Activated T-helper 1 cell treated with anti-CD3 and anti-CD28 coated beads, Interleukin-12 subunit alpha, Interleukin-12 subunit beta, Interleukin-2, Interleukin-4 antibody, amounts not matched to agents 30 ng/mL and 10 ng/mL and 1 ng/mL, durations not matched to agents 14 hours and 24 hours and 36 hours (primary cell): ENCODE measurements at regions of chr20 and their contacts with region 1.

Region 1: GRCh38 chr20:53839423-53840176 is 230.8 kb downstream of the BCAS1 start:
- DNase-seq: peak; percentile 62
- H3K4me3 Mint-ChIP-seq: peak overlapping the region; percentile 80
- H3K27ac Mint-ChIP-seq: peak overlapping the region; percentile 96
- H3K4me1 Mint-ChIP-seq: peaks cover 72% of the 10 kb centered on the region
- H3K27me3 Mint-ChIP-seq: peaks cover 2% of the 10 kb centered on the region

Region 2: GRCh38 chr20:53547664-53548239 is 291.8 kb before region 1 on chr20:
- intact Hi-C with region 1: no loop called
- DNase-seq: peak; percentile 24
- H3K4me3 Mint-ChIP-seq: no peak overlapping the region
- H3K27ac Mint-ChIP-seq: no peak overlapping the region
- H3K4me1 Mint-ChIP-seq: no peaks in the 10 kb centered on the region
- H3K27me3 Mint-ChIP-seq: no peaks in the 10 kb centered on the region

Region 3: DNA sequence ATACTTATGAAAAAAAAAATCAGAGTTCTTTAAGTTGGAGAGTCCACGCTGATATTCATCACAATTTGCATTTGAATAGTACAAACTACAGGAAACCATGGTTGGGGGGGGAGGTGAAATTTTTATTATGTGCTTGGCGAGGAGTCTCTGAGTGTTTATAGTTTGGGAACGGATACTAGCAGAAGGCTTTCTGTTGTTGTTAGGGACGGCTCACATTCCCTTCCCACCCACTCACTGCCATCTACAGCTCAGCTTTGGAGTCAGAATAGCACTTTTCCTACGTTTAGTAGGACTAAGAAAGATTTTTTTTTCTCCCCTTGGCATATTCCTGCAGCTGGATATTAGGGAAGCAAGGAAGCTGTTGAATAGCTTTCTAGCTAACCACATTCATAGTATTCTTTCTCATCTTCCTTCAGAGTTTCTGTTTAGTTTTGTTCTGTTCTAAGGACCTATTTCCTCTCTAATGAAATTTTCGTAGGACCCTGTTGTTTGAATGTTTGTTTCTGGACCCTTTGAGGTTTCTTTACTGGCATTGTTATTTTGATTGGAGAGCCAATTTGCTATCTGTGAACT is 10.8 kb before region 1 on chr20:
- intact Hi-C with region 1: loop called (anchors 2 kb)
- DNase-seq: no peak
- H3K4me3 Mint-ChIP-seq: peak overlapping the region; percentile 84
- H3K27ac Mint-ChIP-seq: peak overlapping the region; percentile 90
- H3K4me1 Mint-ChIP-seq: peaks cover 48% of the 10 kb centered on the region
- H3K27me3 Mint-ChIP-seq: no peaks in the 10 kb centered on the region

Region 4: GRCh38 chr20:53857723-53858236 is 18.2 kb after region 1 on chr20:
- intact Hi-C with region 1: no loop called
- DNase-seq: no peak
- H3K4me3 Mint-ChIP-seq: no peak overlapping the region
- H3K27ac Mint-ChIP-seq: no peak overlapping the region
- H3K4me1 Mint-ChIP-seq: peaks cover 32% of the 10 kb centered on the region
- H3K27me3 Mint-ChIP-seq: no peaks in the 10 kb centered on the region